Transverse colon (tissue), 4 donors: ENCODE measurements at regions of chr1 and their contacts with region 1.

Region 1: DNA sequence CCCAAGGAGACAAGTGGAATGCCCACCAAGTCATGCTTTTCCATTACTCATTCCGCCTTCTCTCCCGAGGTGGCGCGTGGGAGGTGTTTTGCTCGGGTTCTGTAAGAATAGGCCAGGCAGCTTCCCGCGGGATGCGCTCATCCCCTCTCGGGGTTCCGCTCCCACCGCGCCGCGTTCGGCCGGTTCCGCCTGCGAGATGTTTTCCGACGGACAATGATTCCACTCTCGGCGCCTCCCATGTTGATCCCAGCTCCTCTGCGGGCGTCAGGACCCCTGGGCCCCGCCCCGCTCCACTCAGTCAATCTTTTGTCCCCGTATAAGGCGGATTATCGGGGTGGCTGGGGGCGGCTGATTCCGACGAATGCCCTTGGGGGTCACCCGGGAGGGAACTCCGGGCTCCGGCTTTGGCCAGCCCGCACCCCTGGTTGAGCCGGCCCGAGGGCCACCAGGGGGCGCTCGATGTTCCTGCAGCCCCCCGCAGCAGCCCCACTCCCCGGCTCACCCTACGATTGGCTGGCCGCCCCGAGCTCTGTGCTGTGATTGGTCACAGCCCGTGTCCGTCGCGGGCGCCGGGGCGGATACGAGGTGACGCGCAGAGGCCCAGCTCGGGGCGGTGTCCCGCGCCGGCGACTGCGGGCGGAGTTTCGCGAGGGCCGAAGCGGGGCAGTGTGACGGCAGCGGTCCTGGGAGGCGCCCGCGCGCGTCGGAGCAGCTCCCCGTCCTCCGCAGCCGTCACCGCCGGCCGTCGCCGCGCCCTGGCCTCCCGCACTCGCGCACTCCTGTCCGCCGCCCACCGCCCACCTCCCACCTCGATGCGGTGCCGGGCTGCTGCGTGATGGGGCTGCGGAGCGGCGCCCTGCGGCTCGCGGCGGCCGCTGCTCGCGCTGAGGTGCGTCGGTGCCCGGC is at the start of gene KIF1B:
- DNase-seq: peak; percentile 99
- H3K4me3 ChIP-seq: peak within 1 kb of the TSS; percentile 75 to 95 (median 82)
- H3K27ac ChIP-seq: peak within 1 kb of the TSS; percentile 94 to 98 (median 98)
- H3K4me1 ChIP-seq: peaks cover 6 to 38% (median 21%) of the 10 kb centered on the region in 4 donors
- H3K27me3 ChIP-seq: no peaks in the 10 kb centered on the region
- CTCF ChIP-seq: peak; percentile 95 to 100 (median 98)
- EP300 ChIP-seq: no peak
- POLR2A ChIP-seq: peak; percentile 83
- total RNA-seq, gene KIF1B: 50.9 to 87.9 (median 71.4) TPM

Region 2: GRCh38 chr1:9549955-9550546 is 660.1 kb before region 1 on chr1:
- in situ Hi-C with region 1: no loop called
- intact Hi-C with region 1: loop called (anchors 5 kb)
- DNase-seq: no peak
- H3K4me3 ChIP-seq: no peak overlapping the region
- H3K27ac ChIP-seq: no peak overlapping the region
- H3K4me1 ChIP-seq: peaks cover 0 to 6% (median 2%) of the 10 kb centered on the region in 4 donors
- H3K27me3 ChIP-seq: no peaks in the 10 kb centered on the region
- CTCF ChIP-seq: no peak
- EP300 ChIP-seq: no peak
- POLR2A ChIP-seq: no peak

Region 3: GRCh38 chr1:9990944-9991343 is 219.2 kb before region 1 on chr1:
- in situ Hi-C with region 1: no loop called
- intact Hi-C with region 1: no loop called
- DNase-seq: no peak
- H3K4me3 ChIP-seq: no peak overlapping the region
- H3K27ac ChIP-seq: no peak overlapping the region
- H3K4me1 ChIP-seq: no peaks in the 10 kb centered on the region
- H3K27me3 ChIP-seq: peaks cover 15% of the 10 kb centered on the region
- CTCF ChIP-seq: no peak
- EP300 ChIP-seq: no peak
- POLR2A ChIP-seq: no peak

Region 4: GRCh38 chr1:10283318-10283984 is 73.3 kb after region 1 on chr1:
- in situ Hi-C with region 1: no loop called
- intact Hi-C with region 1: loop called (anchors 10 kb)
- DNase-seq: no peak
- H3K4me3 ChIP-seq: no peak overlapping the region
- H3K27ac ChIP-seq: no peak overlapping the region
- H3K4me1 ChIP-seq: peaks cover 0 to 10% (median 0%) of the 10 kb centered on the region in 4 donors
- H3K27me3 ChIP-seq: no peaks in the 10 kb centered on the region
- CTCF ChIP-seq: no peak
- EP300 ChIP-seq: no peak
- POLR2A ChIP-seq: no peak

Region 5: DNA sequence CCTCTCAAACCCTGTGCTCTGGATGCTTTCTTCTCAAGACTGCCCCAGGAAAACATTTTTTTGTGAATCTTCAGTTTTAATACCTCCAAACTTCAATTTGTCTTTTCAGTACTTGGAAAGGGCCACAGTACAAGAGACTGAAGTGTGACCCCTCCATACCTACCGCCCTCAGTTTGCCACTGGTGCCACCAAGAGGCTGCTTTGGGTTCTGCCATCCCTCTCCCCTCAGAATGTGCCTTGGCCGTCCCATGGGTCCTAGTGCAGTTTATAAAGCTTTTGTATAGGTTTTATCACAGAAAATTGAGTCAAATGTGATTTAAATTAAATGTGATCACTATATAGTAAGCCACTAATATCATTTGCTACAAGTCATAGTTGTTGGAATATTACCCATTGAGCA is 127.9 kb after region 1 on chr1:
- in situ Hi-C with region 1: loop called in 3 of 4 experiments (anchors 25 kb)
- intact Hi-C with region 1: no loop called
- DNase-seq: peak; percentile 23
- H3K4me3 ChIP-seq: no peak overlapping the region
- H3K27ac ChIP-seq: no peak overlapping the region
- H3K4me1 ChIP-seq: no peaks in the 10 kb centered on the region
- H3K27me3 ChIP-seq: no peaks in the 10 kb centered on the region
- CTCF ChIP-seq: peak; percentile 53 to 62 (median 61)
- EP300 ChIP-seq: no peak
- POLR2A ChIP-seq: no peak